ENCODE measurements at regions of chr19 and their contacts with region 1.

Region 1: DNA sequence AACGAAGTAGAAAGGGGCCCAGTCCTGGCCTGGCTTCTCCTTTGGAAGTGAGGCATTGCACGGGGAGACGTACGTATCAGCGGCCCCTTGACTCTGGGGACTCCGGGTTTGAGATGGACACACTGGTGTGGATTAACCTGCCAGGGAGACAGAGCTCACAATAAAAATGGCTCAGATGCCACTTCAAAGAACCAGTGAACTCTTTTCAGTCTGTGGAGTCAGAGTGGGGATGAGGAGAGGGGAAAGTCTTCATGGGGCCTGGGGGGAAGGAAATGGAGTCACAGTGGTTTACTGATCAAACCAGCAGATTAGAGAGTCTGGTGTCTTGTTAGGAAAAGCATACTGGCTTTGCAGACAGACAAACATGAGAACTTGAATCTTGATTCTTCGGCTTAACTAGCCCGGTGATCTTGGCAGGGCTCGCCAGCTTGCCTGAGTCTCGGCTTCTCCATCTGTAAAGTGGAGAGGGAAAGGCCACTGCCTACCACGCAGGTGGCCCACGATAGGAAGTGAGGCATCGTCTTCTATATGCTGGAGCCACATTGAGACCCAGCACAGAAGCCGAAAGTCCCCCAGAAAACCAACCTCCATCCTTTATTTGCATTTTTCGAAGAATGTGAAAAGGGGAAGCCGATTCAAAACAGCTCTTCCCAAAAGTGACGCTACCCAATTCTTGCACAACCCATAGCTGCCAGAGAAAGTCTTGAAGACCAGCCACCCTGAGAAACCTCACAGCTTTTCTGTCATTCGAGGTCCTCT is at the start of gene FFAR1:
- DNase-seq: peak; percentile 85
- ATAC-seq: peak; percentile 74
- H3K4me3 Mint-ChIP-seq: peak within 1 kb of the TSS; percentile 67
- H3K27ac Mint-ChIP-seq: peak within 1 kb of the TSS; percentile 99
- H3K4me1 Mint-ChIP-seq: peaks cover 36% of the 10 kb centered on the region
- H3K27me3 Mint-ChIP-seq: peaks cover 3% of the 10 kb centered on the region
- total RNA-seq, gene FFAR1: 0.23 to 0.35 TPM

Region 2: GRCh38 chr19:35030257-35031071 is 316.9 kb before region 1 on chr19 and contains the start of gene SCN1B:
- CTCF ChIA-PET with region 1: no interaction called
- POLR2A ChIA-PET with region 1: no interaction called
- intact Hi-C with region 1: no loop called
- DNase-seq: peak; percentile 89
- ATAC-seq: peak; percentile 89
- H3K4me3 Mint-ChIP-seq: peak within 1 kb of the TSS; percentile 68
- H3K27ac Mint-ChIP-seq: no peak within 1 kb of the TSS
- H3K4me1 Mint-ChIP-seq: peaks cover 6% of the 10 kb centered on the region
- H3K27me3 Mint-ChIP-seq: peaks cover 22% of the 10 kb centered on the region
- total RNA-seq, gene SCN1B: 1.3 to 1.6 TPM

Region 3: GRCh38 chr19:35154525-35155406 is 192.6 kb before region 1 on chr19 and contains the start of gene FXYD5:
- CTCF ChIA-PET with region 1: no interaction called
- POLR2A ChIA-PET with region 1: no interaction called
- intact Hi-C with region 1: loop called in 1 of 2 experiments (anchors 1 kb)
- DNase-seq: peak; percentile 93
- ATAC-seq: peak; percentile 81
- H3K4me3 Mint-ChIP-seq: peak within 1 kb of the TSS; percentile 96
- H3K27ac Mint-ChIP-seq: peak within 1 kb of the TSS; percentile 99
- H3K4me1 Mint-ChIP-seq: peaks cover 52% of the 10 kb centered on the region
- H3K27me3 Mint-ChIP-seq: no peaks in the 10 kb centered on the region
- total RNA-seq, gene FXYD5: 261 to 358 TPM

Region 4: DNA sequence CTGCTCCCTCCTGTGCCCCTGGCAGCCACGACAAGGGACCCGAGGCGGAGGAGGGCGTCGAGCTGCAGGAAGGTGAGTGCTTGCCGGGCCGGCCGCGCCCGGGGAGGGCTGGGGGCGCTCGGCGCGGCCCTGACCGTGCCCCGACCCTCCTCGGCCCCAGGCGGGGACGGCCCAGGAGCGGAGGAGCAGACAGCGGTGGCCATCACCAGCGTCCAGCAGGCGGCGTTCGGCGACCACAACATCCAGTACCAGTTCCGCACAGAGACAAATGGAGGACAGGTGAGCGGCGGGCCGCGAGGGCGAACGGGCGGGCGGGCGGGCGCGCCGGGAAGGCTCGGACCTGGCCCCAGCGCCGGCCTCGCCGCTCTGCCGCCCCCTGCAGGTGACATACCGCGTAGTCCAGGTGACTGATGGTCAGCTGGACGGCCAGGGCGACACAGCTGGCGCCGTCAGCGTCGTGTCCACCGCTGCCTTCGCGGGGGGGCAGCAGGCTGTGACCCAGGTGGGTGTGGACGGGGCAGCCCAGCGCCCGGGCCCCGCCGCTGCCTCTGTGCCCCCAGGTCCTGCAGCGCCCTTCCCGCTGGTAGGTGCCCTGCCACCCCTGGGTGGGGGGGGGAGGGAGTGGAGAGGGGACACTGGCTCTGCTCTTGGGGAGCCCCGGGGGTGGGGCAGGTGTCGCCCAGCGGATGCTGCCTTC is 77.8 kb before region 1 on chr19:
- CTCF ChIA-PET with region 1: no interaction called
- POLR2A ChIA-PET with region 1: interaction called, 3 read pairs
- intact Hi-C with region 1: loop called in 1 of 2 experiments (anchors 1 kb)
- DNase-seq: peak; percentile 88
- ATAC-seq: peak; percentile 68
- H3K4me3 Mint-ChIP-seq: peak overlapping the region; percentile 63
- H3K27ac Mint-ChIP-seq: peak overlapping the region; percentile 63
- H3K4me1 Mint-ChIP-seq: peaks cover 20% of the 10 kb centered on the region
- H3K27me3 Mint-ChIP-seq: no peaks in the 10 kb centered on the region

Region 5: DNA sequence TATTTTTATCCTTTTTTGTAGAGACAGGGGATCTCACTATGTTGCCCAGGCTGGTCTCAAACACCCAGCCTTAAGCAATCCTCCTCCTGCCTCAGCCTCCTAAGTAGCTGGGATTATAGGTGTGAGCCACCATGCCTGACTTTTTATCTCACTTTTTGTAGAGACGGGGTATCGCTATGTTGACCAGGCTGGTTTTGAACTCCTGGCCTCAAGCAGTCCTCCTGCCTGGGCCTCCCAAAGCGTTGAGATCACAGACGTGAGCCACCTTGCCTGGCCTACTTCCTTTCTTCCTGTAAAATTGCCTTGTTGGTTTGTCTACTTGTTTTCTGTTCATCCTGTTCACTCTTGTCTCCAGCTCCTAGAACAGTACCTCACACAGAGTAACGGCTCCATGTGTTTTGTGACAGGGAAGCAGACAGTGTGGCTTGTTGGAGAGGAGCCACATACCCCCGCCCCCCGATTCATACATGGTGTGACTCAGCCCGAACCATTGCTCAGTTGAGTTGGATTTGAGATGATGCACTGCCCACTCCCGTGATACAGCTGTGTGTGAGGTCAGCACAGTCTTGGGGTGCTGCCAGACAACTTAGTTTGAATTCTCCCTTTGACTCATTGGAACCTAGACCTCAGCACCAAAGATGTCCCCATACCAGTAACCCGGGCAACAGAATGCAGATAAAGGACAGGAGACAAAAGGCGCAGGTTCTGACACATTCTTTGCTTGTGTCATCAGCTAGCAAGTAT is 57.7 kb after region 1 on chr19:
- CTCF ChIA-PET with region 1: interaction called, 4 read pairs
- POLR2A ChIA-PET with region 1: no interaction called
- intact Hi-C with region 1: loop called in 1 of 2 experiments (anchors 1 kb)
- DNase-seq: peak; percentile 88
- ATAC-seq: peak; percentile 97
- H3K4me3 Mint-ChIP-seq: no peak overlapping the region
- H3K27ac Mint-ChIP-seq: peak overlapping the region; percentile 88
- H3K4me1 Mint-ChIP-seq: peaks cover 18% of the 10 kb centered on the region
- H3K27me3 Mint-ChIP-seq: peaks cover 8% of the 10 kb centered on the region

Region 6: GRCh38 chr19:35495107-35496064 is 148.0 kb after region 1 on chr19:
- CTCF ChIA-PET with region 1: interaction called, 34 read pairs
- POLR2A ChIA-PET with region 1: no interaction called
- intact Hi-C with region 1: loop called (anchors 1 kb)
- DNase-seq: peak; percentile 91
- ATAC-seq: peak; percentile 97
- H3K4me3 Mint-ChIP-seq: no peak overlapping the region
- H3K27ac Mint-ChIP-seq: peak overlapping the region; percentile 43
- H3K4me1 Mint-ChIP-seq: peaks cover 5% of the 10 kb centered on the region
- H3K27me3 Mint-ChIP-seq: peaks cover 6% of the 10 kb centered on the region

Measured in activated CD4-positive, alpha-beta T cell treated with anti-CD3 and anti-CD28 coated beads for 36 hours (primary cell).